ENCODE measurements at regions of chr1 and their contacts with region 1.

Region 1: DNA sequence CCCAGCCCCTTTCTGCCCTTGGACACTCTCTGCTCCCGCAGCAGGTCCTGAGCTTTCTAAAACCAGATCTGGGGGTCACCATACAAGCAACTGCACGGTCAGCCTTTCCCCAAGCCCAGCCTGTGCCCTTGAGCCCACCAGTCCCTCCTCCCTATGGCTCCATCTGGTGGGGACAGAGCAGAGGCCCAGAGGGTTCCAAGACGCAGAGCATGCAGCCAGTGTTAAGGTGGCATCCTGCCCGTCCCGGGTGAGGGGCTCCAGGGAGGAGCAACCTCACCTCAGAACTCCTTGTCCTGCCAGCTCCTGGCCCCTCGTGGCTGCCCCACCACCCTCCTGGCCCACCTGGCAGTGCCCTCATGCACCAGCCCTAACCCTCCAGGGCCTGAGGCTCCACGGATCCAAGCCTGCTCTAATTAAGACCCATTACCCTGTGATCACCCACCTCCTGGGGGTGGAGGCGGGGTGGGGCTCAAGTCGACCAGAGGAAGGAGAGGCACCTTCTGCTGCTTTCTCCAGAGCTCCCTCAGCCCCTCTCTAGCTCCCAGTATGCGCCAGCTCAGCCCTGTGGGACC is 8.5 kb downstream of the CHD5 start:
- DNase-seq: peak in 1 of 3 donors; percentile 5
- ATAC-seq: peak in 1 of 2 donors; percentile 37
- H3K4me3 ChIP-seq: no peak overlapping the region
- H3K27ac ChIP-seq: no peak overlapping the region
- H3K4me1 ChIP-seq: no peaks in the 10 kb centered on the region
- H3K27me3 ChIP-seq: no peaks in the 10 kb centered on the region

Region 2: DNA sequence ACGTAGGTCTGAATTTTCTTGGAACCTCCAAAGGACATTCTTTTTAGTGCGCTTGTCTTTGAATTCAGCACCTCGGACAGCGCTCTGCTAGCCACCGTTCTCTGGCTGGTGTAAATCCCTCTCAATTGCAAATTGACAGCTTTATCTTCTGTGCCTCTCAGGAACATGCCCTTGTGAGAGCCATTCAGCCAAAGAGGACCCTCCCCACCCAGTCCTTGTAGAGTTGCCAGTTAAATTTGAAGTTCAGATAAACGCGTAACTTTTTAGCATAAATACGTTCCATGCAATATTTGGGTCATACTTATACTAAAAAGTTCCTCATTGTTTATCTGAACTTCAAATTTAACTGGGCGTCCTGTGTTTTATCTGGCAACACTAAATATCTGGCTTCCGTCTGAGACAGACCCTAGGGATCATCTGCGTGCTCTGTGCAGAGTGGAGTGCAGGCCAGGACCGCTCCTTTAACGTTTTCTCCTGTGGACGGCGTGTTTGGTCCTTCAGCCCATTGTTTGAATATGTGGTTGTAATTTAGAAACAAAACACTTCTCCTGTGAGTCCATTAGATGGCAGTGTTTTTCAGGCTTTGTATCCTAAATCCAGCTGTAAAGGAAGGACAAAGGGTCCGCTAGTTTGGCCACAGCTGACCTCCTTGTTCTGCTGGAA is 119.0 kb before region 1 on chr1:
- intact Hi-C with region 1: loop called in 2 of 4 experiments (anchors 10 kb)
- DNase-seq: peak; percentile 70 to 87 (median 82)
- ATAC-seq: peak; percentile 44 to 64
- H3K4me3 ChIP-seq: no peak overlapping the region
- H3K27ac ChIP-seq: no peak overlapping the region
- H3K4me1 ChIP-seq: peaks cover 2% of the 10 kb centered on the region
- H3K27me3 ChIP-seq: no peaks in the 10 kb centered on the region

Region 3: GRCh38 chr1:6245086-6245868 is 73.6 kb after region 1 on chr1:
- intact Hi-C with region 1: no loop called
- DNase-seq: peak; percentile 84 to 94 (median 93)
- ATAC-seq: peak; percentile 75 to 85
- H3K4me3 ChIP-seq: no peak overlapping the region
- H3K27ac ChIP-seq: no peak overlapping the region
- H3K4me1 ChIP-seq: no peaks in the 10 kb centered on the region
- H3K27me3 ChIP-seq: no peaks in the 10 kb centered on the region

Measured in right cardiac atrium (tissue), 5 donors.